Activated CD4-positive, alpha-beta T cell treated with anti-CD3 and anti-CD28 coated beads, Interleukin-2, amount 10 ng/mL, durations not matched to agents 24 days and 14 days (primary cell): ENCODE measurements at regions of chr17 and their contacts with region 1.

Region 1: DNA sequence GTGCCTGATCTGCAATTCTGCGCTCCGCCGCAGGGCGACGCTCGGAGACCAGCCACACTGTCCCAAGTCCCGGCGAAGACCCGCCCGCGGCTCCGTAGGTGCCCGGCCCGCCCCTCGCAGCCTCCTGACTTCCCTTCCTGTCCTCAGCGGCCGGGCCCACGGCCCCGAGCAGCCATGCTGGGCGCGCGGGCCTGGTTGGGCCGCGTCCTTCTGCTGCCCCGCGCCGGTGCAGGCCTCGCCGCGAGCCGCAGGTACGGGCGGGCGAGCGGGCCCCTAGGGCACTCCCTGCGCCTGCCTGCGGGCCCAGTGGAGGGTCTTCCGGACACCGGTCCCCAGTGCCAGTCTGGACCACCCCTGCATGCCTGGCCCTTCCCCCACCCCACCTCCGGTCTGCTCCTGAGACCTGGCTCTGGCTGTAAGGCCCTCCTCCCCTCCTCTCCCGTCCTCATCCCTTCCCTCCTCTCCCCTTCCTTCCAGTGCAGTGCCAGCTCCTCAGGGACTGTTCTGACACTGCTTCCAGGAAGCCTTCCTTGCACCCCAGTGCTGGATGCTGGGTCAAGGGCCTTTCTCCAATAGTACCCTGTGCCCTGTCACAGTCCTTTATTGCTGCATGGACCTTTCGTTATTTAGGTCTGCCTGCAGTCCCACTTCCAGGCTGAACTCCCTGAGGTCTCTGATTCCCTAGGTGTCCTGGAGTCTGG is at the start of gene SPATA20:
- DNase-seq: peak; percentile 96
- H3K4me3 Mint-ChIP-seq: peak within 1 kb of the TSS; percentile 83
- H3K27ac Mint-ChIP-seq: peak within 1 kb of the TSS; percentile 80
- H3K4me1 Mint-ChIP-seq: peaks cover 16% of the 10 kb centered on the region
- H3K27me3 Mint-ChIP-seq: peaks cover 19% of the 10 kb centered on the region
- total RNA-seq, gene SPATA20: 21.6 and 22.4 TPM in 2 replicates

Region 2: GRCh38 chr17:50560185-50560824 is 13.1 kb after region 1 on chr17 and contains the start of gene CACNA1G:
- intact Hi-C with region 1: loop called (anchors 2 kb)
- DNase-seq: peak; percentile 97
- H3K4me3 Mint-ChIP-seq: peak within 1 kb of the TSS; percentile 80
- H3K27ac Mint-ChIP-seq: no peak within 1 kb of the TSS
- H3K4me1 Mint-ChIP-seq: peaks cover 14% of the 10 kb centered on the region
- H3K27me3 Mint-ChIP-seq: peaks cover 63% of the 10 kb centered on the region
- total RNA-seq, gene CACNA1G: 0.07 TPM in 1 of 2 replicates, not detected in the other

Region 3: DNA sequence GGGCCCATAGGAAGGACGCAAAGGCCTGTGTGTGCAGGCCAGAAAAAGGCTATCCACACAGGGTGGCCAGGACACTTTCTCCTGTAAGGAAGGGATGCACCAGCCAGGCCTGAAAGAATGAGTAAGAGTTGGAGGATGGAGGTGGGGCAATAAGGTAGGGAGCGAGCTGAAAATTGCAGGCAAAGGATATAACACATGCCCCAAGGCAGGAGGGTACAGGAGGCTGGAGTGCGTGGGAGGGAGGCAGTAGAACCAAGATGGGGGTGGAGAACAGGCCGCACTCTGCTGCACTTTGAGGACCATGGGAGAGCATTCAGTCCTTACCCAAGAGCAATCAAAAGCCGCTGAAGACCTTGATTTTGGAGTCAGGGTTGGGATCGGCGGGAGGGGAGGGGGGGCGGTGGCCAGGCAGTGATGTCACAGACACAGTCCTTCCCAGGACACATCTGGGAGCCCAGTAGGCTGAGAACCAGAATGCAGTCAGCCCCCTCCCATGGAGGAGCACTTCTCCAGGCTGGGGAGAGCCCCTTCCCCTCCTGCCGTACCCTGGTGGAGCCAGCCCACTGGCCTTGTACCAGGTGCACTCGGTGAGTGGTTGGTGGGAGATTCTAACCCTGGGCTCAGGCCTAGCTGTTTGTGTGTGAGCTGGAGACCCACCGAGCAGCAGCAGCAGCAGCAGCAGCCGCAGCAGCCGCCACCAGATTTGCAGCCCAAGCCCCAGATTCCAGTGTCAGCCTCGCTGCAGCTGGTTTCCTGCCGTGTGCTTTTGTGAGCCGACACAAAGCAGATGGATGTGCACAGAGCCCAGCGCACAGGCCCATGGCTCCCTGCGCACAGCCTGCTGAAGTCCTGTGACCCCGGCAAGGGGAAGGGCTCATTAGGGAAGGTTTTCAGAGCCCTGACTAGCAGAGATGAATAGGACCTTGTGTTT is 143.0 kb after region 1 on chr17:
- intact Hi-C with region 1: loop called (anchors 1 kb)
- DNase-seq: no peak
- H3K4me3 Mint-ChIP-seq: no peak overlapping the region
- H3K27ac Mint-ChIP-seq: no peak overlapping the region
- H3K4me1 Mint-ChIP-seq: no peaks in the 10 kb centered on the region
- H3K27me3 Mint-ChIP-seq: no peaks in the 10 kb centered on the region

Region 4: DNA sequence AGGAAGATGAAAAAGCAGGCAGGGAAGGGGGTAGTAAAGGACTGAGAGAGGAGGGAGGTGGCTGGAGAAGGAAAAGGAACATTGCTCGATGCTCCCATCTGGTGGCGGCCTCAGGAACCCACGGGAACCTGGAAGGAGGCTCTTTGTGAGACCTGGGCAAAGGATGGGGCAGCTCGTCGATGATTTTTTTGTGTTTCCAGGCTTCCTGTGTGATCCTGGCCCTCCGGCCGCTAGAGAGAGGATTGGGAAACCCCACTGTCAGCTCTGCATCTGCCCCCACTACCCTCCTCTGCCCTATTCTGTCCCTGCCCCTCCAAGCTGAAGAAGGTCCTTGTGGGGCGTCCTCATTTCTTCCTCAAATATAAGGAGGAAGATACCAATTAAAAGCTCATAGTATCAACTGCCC is 294.8 kb after region 1 on chr17:
- intact Hi-C with region 1: loop called (anchors 5 kb)
- DNase-seq: peak; percentile 87
- H3K4me3 Mint-ChIP-seq: no peak overlapping the region
- H3K27ac Mint-ChIP-seq: no peak overlapping the region
- H3K4me1 Mint-ChIP-seq: peaks cover 3% of the 10 kb centered on the region
- H3K27me3 Mint-ChIP-seq: no peaks in the 10 kb centered on the region